CD4-positive, alpha-beta memory T cell (primary cell): ENCODE measurements at regions of chr16 and their contacts with region 1.

Region 1: DNA sequence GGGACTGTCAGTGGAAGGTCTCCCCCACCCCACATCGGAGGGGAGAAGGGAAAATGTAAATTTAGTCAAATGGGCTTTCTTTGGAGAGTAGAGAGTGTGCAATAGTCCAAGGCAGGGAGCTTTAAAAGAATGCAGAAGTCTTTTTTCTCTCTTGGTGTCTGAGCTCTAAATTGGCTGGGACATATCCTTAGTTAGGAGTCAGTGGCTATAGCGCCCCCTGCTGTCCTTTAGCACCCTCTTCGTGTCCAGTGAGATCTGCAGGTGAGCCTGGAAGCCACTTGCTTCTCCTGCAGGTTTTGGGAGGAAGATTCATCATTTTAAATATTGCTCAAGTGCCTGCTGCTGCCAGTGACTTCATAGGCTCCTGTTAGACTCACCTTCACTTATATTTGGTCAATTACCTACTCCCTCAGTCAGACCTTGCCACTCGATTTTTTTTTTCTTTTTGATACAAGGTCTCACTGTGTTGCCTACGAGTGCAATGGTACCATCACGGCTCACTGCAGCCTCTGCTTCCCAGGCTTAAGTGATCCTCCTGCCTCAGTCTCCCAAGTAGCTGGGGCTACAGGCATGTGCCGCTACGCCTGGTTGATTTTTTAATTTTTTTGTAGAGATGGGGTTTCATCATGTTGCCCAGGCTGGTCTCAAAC is 174.8 kb downstream of the PRKCB start:
- DNase-seq: peak; percentile 75 to 81 (median 76)
- H3K4me3 ChIP-seq: no peak overlapping the region
- H3K4me3 Mint-ChIP-seq: peak overlapping the region in 2 of 8 donors; percentile 26 to 41
- H3K27ac ChIP-seq: no peak overlapping the region
- H3K27ac Mint-ChIP-seq: peak overlapping the region in 5 of 7 donors; percentile 28 to 76 (median 46)
- H3K4me1 ChIP-seq: peaks cover 50% of the 10 kb centered on the region
- H3K4me1 Mint-ChIP-seq: peaks cover 47 to 81% (median 62%) of the 10 kb centered on the region in 4 donors
- H3K27me3 ChIP-seq: no peaks in the 10 kb centered on the region
- H3K27me3 Mint-ChIP-seq: no peaks in the 10 kb centered on the region

Region 2: GRCh38 chr16:23796941-23797340 is 213.6 kb before region 1 on chr16:
- CTCF ChIA-PET with region 1: interaction called, 472 read pairs
- POLR2A ChIA-PET with region 1: interaction called, 31 read pairs
- intact Hi-C with region 1: no loop called
- DNase-seq: no peak
- H3K4me3 ChIP-seq: no peak overlapping the region
- H3K4me3 Mint-ChIP-seq: no peak overlapping the region
- H3K27ac ChIP-seq: no peak overlapping the region
- H3K27ac Mint-ChIP-seq: no peak overlapping the region
- H3K4me1 ChIP-seq: no peaks in the 10 kb centered on the region
- H3K4me1 Mint-ChIP-seq: peaks cover 0 to 3% (median 0%) of the 10 kb centered on the region in 4 donors
- H3K27me3 ChIP-seq: no peaks in the 10 kb centered on the region
- H3K27me3 Mint-ChIP-seq: no peaks in the 10 kb centered on the region

Region 3: GRCh38 chr16:23842137-23842600 is 168.4 kb before region 1 on chr16:
- CTCF ChIA-PET with region 1: interaction called, 22 read pairs
- POLR2A ChIA-PET with region 1: interaction called, 5 read pairs
- intact Hi-C with region 1: no loop called
- DNase-seq: no peak
- H3K4me3 ChIP-seq: no peak overlapping the region
- H3K4me3 Mint-ChIP-seq: peak overlapping the region in 5 of 8 donors; percentile 8 to 43 (median 36)
- H3K27ac ChIP-seq: no peak overlapping the region
- H3K27ac Mint-ChIP-seq: peak overlapping the region; percentile 15 to 86 (median 53)
- H3K4me1 ChIP-seq: peaks cover 63% of the 10 kb centered on the region
- H3K4me1 Mint-ChIP-seq: peaks cover 57 to 79% (median 62%) of the 10 kb centered on the region in 4 donors
- H3K27me3 ChIP-seq: no peaks in the 10 kb centered on the region
- H3K27me3 Mint-ChIP-seq: no peaks in the 10 kb centered on the region

Region 4: DNA sequence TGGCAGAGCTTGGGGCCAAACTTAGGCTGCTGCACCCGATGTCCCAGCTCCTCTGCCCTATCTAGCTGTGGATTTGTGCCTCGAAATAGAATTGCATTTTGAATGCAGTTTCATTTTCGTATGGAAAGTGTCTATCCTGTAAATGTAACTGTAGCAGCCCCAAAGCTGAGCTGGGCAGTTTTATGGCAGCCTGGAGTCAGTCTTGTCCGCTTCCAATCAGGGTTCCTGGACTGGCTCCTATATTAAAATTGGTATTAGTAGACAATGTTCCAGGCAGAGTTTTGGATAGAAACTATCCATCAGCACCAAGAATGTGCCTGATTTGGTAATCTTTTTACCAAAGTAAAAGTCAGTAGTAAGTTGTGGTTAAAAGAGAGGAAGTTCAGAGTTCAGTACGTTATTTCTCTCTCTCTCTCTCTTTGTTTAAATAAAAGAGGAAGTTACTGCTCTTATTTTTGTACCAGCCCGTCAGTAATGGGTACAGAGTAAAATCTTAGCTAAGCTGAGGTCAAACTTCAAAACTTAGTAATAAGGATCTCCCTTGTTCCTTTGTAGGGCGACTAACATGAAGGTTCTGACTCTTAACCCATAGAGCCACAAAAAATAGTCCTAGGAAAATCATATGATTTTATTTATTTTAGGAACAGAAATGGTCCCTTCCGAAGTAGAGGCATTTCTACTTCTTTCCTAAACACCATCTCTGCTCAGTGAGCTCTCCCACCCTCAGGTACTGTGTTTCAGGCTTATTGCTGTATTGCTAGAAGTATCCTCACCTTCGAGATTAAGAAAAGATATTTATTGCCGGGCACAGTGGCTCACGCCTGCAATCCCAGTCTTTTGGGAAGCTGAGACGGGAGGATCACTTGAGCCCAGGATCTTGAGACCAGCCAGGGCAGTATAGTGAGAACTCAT is 146.8 kb before region 1 on chr16:
- CTCF ChIA-PET with region 1: interaction called, 10 read pairs
- POLR2A ChIA-PET with region 1: interaction called, 4 read pairs
- intact Hi-C with region 1: loop called (anchors 5 kb)
- DNase-seq: peak; percentile 48 to 70 (median 62)
- H3K4me3 ChIP-seq: peak overlapping the region; percentile 48 to 71
- H3K4me3 Mint-ChIP-seq: peak overlapping the region; percentile 84 to 94 (median 90)
- H3K27ac ChIP-seq: peak overlapping the region; percentile 43
- H3K27ac Mint-ChIP-seq: peak overlapping the region; percentile 86 to 96 (median 88)
- H3K4me1 ChIP-seq: peaks cover 80% of the 10 kb centered on the region
- H3K4me1 Mint-ChIP-seq: peaks cover 59 to 88% (median 77%) of the 10 kb centered on the region in 4 donors
- H3K27me3 ChIP-seq: no peaks in the 10 kb centered on the region
- H3K27me3 Mint-ChIP-seq: no peaks in the 10 kb centered on the region

Region 5: DNA sequence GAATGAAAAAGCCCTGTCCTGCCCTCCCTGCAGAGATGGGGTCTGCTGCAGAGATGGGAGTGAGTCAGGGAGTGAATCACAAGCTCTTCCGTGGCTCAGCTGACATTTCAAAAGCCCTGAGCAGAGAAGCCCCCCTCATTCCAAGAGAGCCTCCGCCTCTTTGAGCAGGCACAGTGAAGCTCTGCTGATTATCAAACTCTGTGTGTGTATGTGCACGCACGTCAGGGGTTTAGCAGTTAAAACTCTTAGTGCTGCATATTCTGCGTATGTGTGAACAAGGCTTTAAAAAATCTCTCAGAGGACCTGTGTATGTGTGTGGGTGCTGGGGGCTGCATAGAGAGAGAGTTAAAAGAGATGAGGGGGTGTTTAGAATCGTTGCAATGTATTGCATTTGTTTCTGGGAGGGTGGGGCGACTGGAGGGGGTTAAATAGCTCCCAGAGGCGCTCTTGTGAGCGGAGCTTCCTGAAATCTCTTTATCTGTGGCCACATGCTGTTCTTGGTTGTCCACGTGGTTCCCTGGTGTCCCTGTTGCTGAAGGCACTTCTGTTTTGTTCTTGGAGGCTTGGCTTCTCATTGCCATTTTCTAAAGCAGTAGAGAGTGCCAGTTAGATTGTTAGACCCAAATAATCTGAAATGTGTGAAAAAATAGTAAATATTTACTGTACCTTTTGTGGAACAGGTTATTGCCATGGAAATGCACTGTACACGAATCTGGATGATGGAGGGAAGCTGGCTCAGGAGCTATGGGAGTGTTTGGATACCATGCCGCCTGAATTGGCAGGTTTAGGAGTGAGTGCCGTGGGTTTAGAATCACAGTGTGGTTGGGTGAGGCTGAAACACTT is 58.2 kb before region 1 on chr16:
- CTCF ChIA-PET with region 1: interaction called, 13 read pairs
- POLR2A ChIA-PET with region 1: interaction called, 7 read pairs
- intact Hi-C with region 1: loop called (anchors 1 kb)
- DNase-seq: peak in 1 of 5 donors; percentile 13
- H3K4me3 ChIP-seq: no peak overlapping the region
- H3K4me3 Mint-ChIP-seq: peak overlapping the region in 7 of 8 donors; percentile 52 to 81 (median 57)
- H3K27ac ChIP-seq: peak overlapping the region; percentile 21
- H3K27ac Mint-ChIP-seq: peak overlapping the region; percentile 83 to 96 (median 91)
- H3K4me1 ChIP-seq: peaks cover 93% of the 10 kb centered on the region
- H3K4me1 Mint-ChIP-seq: peaks cover 67 to 91% (median 80%) of the 10 kb centered on the region in 4 donors
- H3K27me3 ChIP-seq: no peaks in the 10 kb centered on the region
- H3K27me3 Mint-ChIP-seq: no peaks in the 10 kb centered on the region

Region 6: DNA sequence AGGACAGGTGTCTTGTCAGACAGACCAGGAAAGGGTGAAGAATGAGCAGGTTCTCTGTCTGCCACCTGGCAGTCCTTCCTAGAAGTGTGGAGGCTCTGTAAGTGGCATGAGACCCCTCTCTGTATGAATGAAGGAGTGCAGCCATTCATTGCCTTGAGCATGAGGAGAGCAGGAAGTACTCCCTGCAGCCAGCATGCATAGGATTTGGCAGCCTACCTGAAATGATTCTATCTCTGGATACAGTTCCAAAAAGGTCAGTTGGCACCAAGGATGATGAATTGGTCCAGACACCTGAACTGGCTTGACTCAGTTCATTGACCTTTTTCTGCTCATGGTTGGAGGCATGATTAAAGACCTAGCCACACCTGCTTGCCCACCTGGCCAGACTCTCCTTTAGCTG is 11.8 kb before region 1 on chr16:
- CTCF ChIA-PET with region 1: interaction called, 16 read pairs
- POLR2A ChIA-PET with region 1: no interaction called
- intact Hi-C with region 1: no loop called
- DNase-seq: no peak
- H3K4me3 ChIP-seq: no peak overlapping the region
- H3K4me3 Mint-ChIP-seq: no peak overlapping the region
- H3K27ac ChIP-seq: no peak overlapping the region
- H3K27ac Mint-ChIP-seq: peak overlapping the region in 1 of 7 donors; percentile 74
- H3K4me1 ChIP-seq: no peaks in the 10 kb centered on the region
- H3K4me1 Mint-ChIP-seq: peaks cover 8 to 20% (median 11%) of the 10 kb centered on the region in 4 donors
- H3K27me3 ChIP-seq: no peaks in the 10 kb centered on the region
- H3K27me3 Mint-ChIP-seq: no peaks in the 10 kb centered on the region

Region 7: GRCh38 chr16:24041826-24042631 is 31.5 kb after region 1 on chr16:
- CTCF ChIA-PET with region 1: interaction called, 30 read pairs
- POLR2A ChIA-PET with region 1: no interaction called
- intact Hi-C with region 1: no loop called
- DNase-seq: peak; percentile 68 to 76 (median 73)
- H3K4me3 ChIP-seq: no peak overlapping the region
- H3K4me3 Mint-ChIP-seq: no peak overlapping the region
- H3K27ac ChIP-seq: no peak overlapping the region
- H3K27ac Mint-ChIP-seq: peak overlapping the region in 1 of 7 donors; percentile 24
- H3K4me1 ChIP-seq: no peaks in the 10 kb centered on the region
- H3K4me1 Mint-ChIP-seq: peaks cover 0 to 31% (median 12%) of the 10 kb centered on the region in 4 donors
- H3K27me3 ChIP-seq: no peaks in the 10 kb centered on the region
- H3K27me3 Mint-ChIP-seq: no peaks in the 10 kb centered on the region

Region 8: DNA sequence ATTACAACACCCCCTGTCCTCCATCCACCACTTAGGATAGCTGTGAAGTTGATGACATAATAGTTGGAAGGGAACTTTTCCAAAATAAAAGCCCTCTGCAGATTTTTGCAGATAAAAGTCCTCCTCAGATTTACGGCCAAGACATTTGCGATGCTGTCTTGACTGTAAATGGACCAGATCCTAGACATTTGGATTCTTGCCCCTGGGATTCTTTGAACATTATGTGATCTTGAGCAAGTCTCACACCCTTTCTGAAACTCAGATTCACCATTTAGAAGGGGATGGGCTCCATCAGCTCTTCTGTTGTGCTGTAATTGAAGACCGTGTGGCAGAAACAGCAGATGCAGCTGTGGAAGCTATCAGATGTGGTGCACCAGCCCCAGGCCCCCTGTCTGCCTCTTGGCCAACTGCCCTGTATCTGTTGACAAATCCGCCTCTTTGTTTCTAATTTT is 91.7 kb after region 1 on chr16:
- CTCF ChIA-PET with region 1: no interaction called
- POLR2A ChIA-PET with region 1: no interaction called
- intact Hi-C with region 1: no loop called
- DNase-seq: no peak
- H3K4me3 ChIP-seq: no peak overlapping the region
- H3K4me3 Mint-ChIP-seq: no peak overlapping the region
- H3K27ac ChIP-seq: no peak overlapping the region
- H3K27ac Mint-ChIP-seq: peak overlapping the region in 2 of 7 donors; percentile 14 to 16
- H3K4me1 ChIP-seq: no peaks in the 10 kb centered on the region
- H3K4me1 Mint-ChIP-seq: peaks cover 0 to 12% (median 5%) of the 10 kb centered on the region in 4 donors
- H3K27me3 ChIP-seq: no peaks in the 10 kb centered on the region
- H3K27me3 Mint-ChIP-seq: no peaks in the 10 kb centered on the region